ENCODE measurements at regions of chr2 and their contacts with region 1.

Region 1: GRCh38 chr2:112481050-112481527 is 867 bp upstream of the TTL start:
- DNase-seq: peak; percentile 85 to 89
- H3K4me3 ChIP-seq: peak overlapping the region; percentile 64 to 73
- H3K27ac ChIP-seq: peak overlapping the region; percentile 78 to 80
- H3K4me1 ChIP-seq: peaks cover 0 to 29% (median 18%) of the 10 kb centered on the region in 4 donors
- H3K27me3 ChIP-seq: no peaks in the 10 kb centered on the region
- CTCF ChIP-seq: peak; percentile 66 to 83

Region 2: DNA sequence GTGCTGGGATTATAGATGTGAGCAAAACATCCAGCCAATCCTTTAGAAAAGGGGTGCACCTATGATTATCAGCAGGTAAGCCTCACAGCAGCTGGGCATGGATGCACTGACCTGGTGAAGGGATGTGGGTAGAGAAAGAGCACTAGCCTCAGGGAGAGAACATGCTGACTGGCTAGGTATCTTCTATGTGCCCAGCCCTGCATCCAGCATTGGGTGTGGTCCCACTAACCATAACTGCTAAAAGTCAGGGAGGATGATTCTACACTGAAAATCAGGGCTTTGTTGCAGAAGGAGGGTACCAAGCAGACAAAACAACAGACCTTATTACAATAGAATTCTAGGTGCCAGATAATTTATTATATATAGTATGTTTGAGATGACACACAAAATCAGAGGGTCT is 26.5 kb before region 1 on chr2:
- intact Hi-C with region 1: no loop called
- DNase-seq: no peak
- H3K4me3 ChIP-seq: no peak overlapping the region
- H3K27ac ChIP-seq: no peak overlapping the region
- H3K4me1 ChIP-seq: no peaks in the 10 kb centered on the region
- H3K27me3 ChIP-seq: no peaks in the 10 kb centered on the region
- CTCF ChIP-seq: no peak

Region 3: GRCh38 chr2:112542123-112542983 is 61.3 kb after region 1 on chr2 and contains the start of gene POLR1B:
- intact Hi-C with region 1: loop called (anchors 2 kb)
- DNase-seq: peak; percentile 76 to 88
- H3K4me3 ChIP-seq: peak within 1 kb of the TSS; percentile 76 to 81
- H3K27ac ChIP-seq: peak within 1 kb of the TSS; percentile 81 to 88
- H3K4me1 ChIP-seq: peaks cover 0 to 17% (median 11%) of the 10 kb centered on the region in 4 donors
- H3K27me3 ChIP-seq: no peaks in the 10 kb centered on the region
- CTCF ChIP-seq: no peak

Region 4: DNA sequence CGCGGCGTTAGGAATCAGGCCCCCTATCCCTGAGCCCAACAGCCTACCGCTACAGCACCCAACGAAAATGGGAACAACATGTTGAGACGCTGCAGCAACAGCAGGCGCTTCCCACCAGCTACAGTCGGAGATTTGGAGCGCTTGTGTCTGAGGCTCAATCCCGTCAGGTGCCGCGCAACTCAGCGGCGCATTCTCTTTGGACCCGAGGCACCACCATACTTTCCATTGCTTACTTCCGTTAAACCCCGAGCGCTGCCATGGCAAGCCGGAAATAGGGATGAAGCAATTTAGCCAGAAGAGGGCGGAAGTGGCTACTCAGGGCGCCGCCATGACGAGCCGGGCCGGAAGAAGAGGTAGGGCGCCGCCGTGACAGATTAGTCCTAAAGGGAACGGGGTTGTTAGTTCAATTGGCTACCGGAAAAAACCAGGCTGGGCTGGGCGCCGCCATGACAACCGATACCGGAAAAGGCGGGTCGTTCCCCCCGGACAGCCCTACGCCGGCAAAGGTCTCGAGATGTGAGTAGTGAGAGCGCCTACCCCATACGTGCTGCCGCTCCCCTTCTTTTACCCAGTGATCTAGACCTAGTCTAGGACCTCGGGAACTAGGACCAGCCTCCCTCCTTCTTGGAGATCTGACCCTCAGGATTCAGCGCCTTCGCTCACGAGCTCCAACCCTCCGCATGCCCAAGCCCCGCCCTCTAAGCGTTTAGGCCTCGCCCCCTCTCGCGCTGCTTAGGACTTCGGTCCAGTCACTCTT is 103.2 kb after region 1 on chr2 and contains the start of gene CHCHD5:
- intact Hi-C with region 1: loop called (anchors 5 kb)
- DNase-seq: peak; percentile 98
- H3K4me3 ChIP-seq: peak within 1 kb of the TSS; percentile 63 to 76
- H3K27ac ChIP-seq: peak within 1 kb of the TSS; percentile 92 to 94
- H3K4me1 ChIP-seq: peaks cover 0 to 19% (median 13%) of the 10 kb centered on the region in 4 donors
- H3K27me3 ChIP-seq: no peaks in the 10 kb centered on the region
- CTCF ChIP-seq: peak; percentile 5 to 17

Region 5: DNA sequence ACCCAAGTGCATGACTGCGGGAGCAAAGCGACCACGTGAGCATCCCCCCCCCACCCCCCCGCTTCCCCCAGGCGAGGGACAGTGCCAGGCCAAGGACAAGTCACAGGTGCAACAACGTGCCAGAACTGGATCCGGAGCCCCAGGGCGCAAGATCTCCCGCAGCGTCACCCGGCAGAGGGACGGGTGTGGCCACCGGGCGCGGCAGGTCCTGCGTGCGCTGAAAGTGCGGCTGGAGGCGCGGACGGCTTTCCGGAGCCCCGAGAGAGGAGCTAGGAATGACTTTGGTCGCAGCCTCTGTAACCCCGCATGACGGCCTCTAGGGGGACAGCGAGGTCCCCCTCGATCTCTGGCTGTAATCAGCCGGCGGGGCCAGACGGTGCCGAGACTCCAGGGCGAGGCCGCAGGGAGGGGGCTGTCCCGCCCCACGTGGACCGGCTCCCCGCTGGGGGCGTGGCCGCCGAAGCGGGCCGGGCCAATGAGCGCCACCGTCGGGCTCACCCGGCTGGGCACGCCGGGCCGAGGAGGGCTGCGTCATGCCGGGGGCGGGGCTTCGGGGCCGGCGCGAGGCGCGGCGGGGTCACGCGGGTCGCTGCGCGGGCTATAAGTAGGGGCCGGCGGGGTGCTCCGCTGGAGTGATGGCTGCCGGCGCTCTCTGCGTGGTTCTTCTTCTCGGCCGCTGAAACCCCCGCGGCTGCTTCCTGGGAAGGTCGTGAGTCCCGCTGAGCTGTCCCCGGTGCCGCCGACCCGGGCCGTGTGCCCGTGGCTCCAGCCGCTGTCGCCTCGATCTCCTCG is 164.4 kb after region 1 on chr2 and contains the start of gene SLC20A1:
- intact Hi-C with region 1: loop called (anchors 5 kb)
- DNase-seq: peak; percentile 90 to 97
- H3K4me3 ChIP-seq: peak within 1 kb of the TSS; percentile 68 to 79
- H3K27ac ChIP-seq: peak within 1 kb of the TSS; percentile 89 to 94
- H3K4me1 ChIP-seq: peaks cover 0 to 42% (median 15%) of the 10 kb centered on the region in 4 donors
- H3K27me3 ChIP-seq: no peaks in the 10 kb centered on the region
- CTCF ChIP-seq: peak; percentile 9 to 30

Region 6: GRCh38 chr2:112881217-112881985 is 400.3 kb after region 1 on chr2:
- intact Hi-C with region 1: no loop called
- DNase-seq: no peak
- H3K4me3 ChIP-seq: no peak overlapping the region
- H3K27ac ChIP-seq: no peak overlapping the region
- H3K4me1 ChIP-seq: no peaks in the 10 kb centered on the region
- H3K27me3 ChIP-seq: peaks cover 0 to 6% of the 10 kb centered on the region in 2 donors
- CTCF ChIP-seq: no peak

Region 7: DNA sequence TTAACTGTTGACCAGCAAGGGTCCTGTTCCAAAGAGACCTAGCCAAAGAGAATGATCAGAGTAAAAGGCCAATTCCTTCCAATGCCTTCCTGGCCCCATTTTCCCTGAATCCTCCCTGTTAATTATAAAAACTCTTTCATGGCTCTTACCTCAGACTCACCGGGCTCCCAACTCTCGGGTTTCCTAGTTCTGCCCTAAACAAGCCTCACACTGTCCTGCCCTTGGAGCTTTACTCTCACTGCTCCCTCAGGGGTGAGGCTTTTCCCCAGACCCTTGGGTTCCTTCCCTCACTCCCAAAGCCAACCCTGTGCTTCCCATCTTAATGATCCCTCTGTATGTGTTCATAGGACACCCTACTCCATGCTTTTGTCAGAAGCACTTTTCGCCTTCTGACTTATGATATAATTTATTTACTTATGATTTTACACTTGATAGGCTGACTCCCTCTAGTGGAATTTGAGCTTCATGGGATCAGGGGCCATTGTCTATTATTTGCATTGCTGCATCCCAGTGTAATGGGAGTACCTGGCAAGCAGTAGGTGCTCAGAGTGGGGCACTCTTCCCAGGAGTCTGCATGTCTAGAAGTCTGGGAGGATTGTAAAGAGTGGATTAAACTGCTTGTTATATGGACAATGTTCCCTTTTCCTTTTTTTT is 926.5 kb after region 1 on chr2:
- intact Hi-C with region 1: no loop called
- DNase-seq: no peak
- H3K4me3 ChIP-seq: no peak overlapping the region
- H3K27ac ChIP-seq: no peak overlapping the region
- H3K4me1 ChIP-seq: no peaks in the 10 kb centered on the region
- H3K27me3 ChIP-seq: peaks cover 0 to 7% of the 10 kb centered on the region in 2 donors
- CTCF ChIP-seq: no peak

Measured in tibial artery (tissue), 4 donors.